Psoas muscle (tissue), 8 donors: ENCODE measurements at regions of chr19 and their contacts with region 1.

Region 1: GRCh38 chr19:58572818-58573657 is at the start of gene MZF1:
- DNase-seq: peak; percentile 100
- ATAC-seq: peak; percentile 80 to 82 (median 80)
- H3K4me3 ChIP-seq: peak within 1 kb of the TSS; percentile 94
- H3K27ac ChIP-seq: peak within 1 kb of the TSS; percentile 99
- H3K4me1 ChIP-seq: peaks cover 18% of the 10 kb centered on the region
- H3K27me3 ChIP-seq: no peaks in the 10 kb centered on the region
- CTCF ChIP-seq: peak; percentile 11
- total RNA-seq, gene MZF1: 8.2 to 13.0 (median 11.1) TPM

Region 2: GRCh38 chr19:58547323-58548312 is 25.4 kb before region 1 on chr19:
- intact Hi-C with region 1: no loop called
- DNase-seq: no peak
- ATAC-seq: no peak
- H3K4me3 ChIP-seq: no peak overlapping the region
- H3K27ac ChIP-seq: no peak overlapping the region
- H3K4me1 ChIP-seq: peaks cover 20% of the 10 kb centered on the region
- H3K27me3 ChIP-seq: no peaks in the 10 kb centered on the region
- CTCF ChIP-seq: no peak

Region 3: GRCh38 chr19:58558623-58559274 is 14.3 kb before region 1 on chr19:
- intact Hi-C with region 1: loop called (anchors 1 kb)
- DNase-seq: peak; percentile 99 to 100
- ATAC-seq: peak; percentile 79 to 83 (median 82)
- H3K4me3 ChIP-seq: peak overlapping the region; percentile 84
- H3K27ac ChIP-seq: peak overlapping the region; percentile 96
- H3K4me1 ChIP-seq: peaks cover 63% of the 10 kb centered on the region
- H3K27me3 ChIP-seq: no peaks in the 10 kb centered on the region
- CTCF ChIP-seq: no peak